ENCODE measurements at regions of chr4 and their contacts with region 1.

Region 1: DNA sequence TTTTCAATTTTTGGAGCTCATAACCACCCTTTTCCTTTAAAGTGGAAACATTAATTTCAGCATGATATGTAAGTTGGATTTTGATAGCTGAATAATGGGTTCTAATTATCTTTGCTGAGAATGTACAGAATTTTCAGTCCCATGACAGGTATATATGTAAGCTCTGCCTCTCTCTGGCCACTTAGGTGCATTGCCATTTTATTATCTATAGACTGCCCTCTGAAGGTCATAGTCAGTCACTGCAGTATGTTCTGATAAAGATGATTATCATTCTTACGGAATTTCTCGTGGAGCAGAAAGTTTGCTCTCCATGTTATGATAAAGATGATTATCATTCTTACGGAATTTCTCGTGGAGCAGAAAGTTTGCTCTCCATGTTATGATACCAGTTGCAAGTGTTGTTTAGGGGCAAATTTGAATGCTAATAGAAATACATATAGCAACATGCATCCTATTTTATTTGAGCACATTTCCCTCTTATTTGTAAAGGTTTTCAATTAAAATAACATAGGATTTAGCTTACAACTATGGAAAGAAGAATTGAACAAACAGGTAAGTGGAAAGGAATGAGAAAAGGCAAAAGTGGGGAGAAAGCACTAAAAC is 10.4 kb downstream of the AFP start:
- DNase-seq: no peak
- H3K4me3 ChIP-seq: no peak overlapping the region
- H3K27me3 ChIP-seq: 0 out of 2 replicates have a peak, but pooled peaks cover 2% of the 10 kb centered on the region
- CTCF ChIP-seq: peak; percentile 76

Region 2: DNA sequence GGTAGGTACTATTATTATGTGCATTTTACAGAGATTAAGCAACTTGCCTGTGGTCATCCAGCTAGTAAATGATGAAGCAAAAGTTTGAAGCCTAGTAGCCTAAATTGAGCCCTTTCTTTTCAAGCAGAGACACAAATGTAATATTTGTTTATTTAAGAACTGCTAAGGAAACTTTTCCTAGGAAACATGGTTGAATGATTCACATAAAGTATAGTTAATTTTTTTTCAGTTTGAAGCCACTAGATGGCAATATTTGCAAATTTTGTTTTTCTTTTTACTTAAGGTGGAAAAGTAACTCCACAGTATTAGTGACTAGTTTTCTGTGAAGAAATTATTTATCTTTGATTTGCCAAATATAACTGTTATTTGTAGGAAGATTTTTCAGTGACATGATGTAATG is 135.0 kb before region 1 on chr4:
- CTCF ChIA-PET with region 1: interaction called, 14 read pairs
- POLR2A ChIA-PET with region 1: no interaction called
- DNase-seq: no peak
- H3K4me3 ChIP-seq: no peak overlapping the region
- H3K27me3 ChIP-seq: no peaks in the 10 kb centered on the region
- CTCF ChIP-seq: peak; percentile 35

Region 3: DNA sequence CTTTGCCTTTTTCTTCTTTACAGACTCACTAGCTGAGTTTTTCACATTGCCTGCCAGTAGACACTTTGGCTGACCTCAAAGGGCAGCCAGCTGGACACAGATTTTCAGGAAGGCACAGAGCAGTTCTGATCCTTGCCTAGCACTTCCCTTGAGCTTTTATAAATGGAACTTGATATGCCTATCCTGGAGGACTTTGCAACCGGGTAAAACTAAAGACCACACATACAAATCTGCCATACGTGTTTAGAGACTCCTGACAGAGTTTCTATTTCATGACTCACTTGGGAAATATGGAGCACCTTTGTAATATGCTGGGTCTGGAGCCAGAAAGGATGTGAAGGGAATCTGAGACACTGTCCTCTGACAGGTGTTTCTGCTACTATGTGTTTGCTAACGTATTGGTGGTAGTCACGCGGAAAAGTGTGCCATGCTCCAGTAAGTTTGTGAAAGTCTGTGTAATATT is 230.5 kb after region 1 on chr4:
- CTCF ChIA-PET with region 1: no interaction called
- POLR2A ChIA-PET with region 1: no interaction called
- DNase-seq: no peak
- H3K4me3 ChIP-seq: no peak overlapping the region
- H3K27me3 ChIP-seq: no peaks in the 10 kb centered on the region
- CTCF ChIP-seq: no peak